ENCODE measurements at regions of chr2 and their contacts with region 1.

Region 1: GRCh38 chr2:46187112-46187618 is 110.0 kb upstream of the EPAS1 start:
- DNase-seq: peak; percentile 37
- H3K4me3 ChIP-seq: no peak overlapping the region
- CTCF ChIP-seq: no peak

Region 2: DNA sequence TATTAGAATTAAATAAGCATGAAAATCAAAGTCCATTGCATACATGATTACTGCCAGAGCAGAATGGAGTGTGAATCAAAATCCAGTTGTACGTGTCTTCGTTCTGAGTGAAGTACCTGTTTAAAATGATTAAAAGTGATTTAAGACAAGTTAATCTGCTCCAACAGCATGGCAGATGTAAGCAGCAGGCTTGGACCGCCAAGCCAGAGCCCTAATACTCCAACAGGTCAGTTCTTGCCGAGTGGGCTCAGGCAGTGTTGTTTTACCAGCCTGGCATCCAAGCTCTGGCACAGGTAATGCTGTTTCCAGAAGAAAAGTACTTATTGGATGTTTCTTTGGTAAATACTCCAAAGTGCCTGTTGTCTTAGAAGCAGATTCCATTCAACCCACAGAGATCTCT is 61.4 kb before region 1 on chr2:
- in situ Hi-C with region 1: loop called (anchors 5 kb)
- DNase-seq: no peak
- H3K4me3 ChIP-seq: no peak overlapping the region
- CTCF ChIP-seq: no peak

Region 3: GRCh38 chr2:46257476-46257875 is 70.3 kb after region 1 on chr2:
- in situ Hi-C with region 1: loop called (anchors 10 kb)
- DNase-seq: peak; percentile 38
- H3K4me3 ChIP-seq: no peak overlapping the region
- CTCF ChIP-seq: no peak

Measured in astrocyte of the cerebellum (primary cell).